ENCODE measurements at regions of chr1 and their contacts with region 1.

Region 1: GRCh38 chr1:228794173-228794572 is 58.9 kb downstream of the RHOU start:
- DNase-seq: no peak
- ATAC-seq: peak; percentile 74
- H3K4me3 Mint-ChIP-seq: no peak overlapping the region
- H3K27ac Mint-ChIP-seq: no peak overlapping the region
- H3K4me1 Mint-ChIP-seq: peaks cover 30% of the 10 kb centered on the region
- H3K27me3 Mint-ChIP-seq: no peaks in the 10 kb centered on the region

Region 2: GRCh38 chr1:228804671-228805413 is 10.7 kb after region 1 on chr1:
- POLR2A ChIA-PET with region 1: interaction called, 26 read pairs
- DNase-seq: peak; percentile 59
- ATAC-seq: peak; percentile 97
- H3K4me3 Mint-ChIP-seq: peak overlapping the region; percentile 72
- H3K27ac Mint-ChIP-seq: peak overlapping the region; percentile 96
- H3K4me1 Mint-ChIP-seq: peaks cover 70% of the 10 kb centered on the region
- H3K27me3 Mint-ChIP-seq: no peaks in the 10 kb centered on the region

Region 3: DNA sequence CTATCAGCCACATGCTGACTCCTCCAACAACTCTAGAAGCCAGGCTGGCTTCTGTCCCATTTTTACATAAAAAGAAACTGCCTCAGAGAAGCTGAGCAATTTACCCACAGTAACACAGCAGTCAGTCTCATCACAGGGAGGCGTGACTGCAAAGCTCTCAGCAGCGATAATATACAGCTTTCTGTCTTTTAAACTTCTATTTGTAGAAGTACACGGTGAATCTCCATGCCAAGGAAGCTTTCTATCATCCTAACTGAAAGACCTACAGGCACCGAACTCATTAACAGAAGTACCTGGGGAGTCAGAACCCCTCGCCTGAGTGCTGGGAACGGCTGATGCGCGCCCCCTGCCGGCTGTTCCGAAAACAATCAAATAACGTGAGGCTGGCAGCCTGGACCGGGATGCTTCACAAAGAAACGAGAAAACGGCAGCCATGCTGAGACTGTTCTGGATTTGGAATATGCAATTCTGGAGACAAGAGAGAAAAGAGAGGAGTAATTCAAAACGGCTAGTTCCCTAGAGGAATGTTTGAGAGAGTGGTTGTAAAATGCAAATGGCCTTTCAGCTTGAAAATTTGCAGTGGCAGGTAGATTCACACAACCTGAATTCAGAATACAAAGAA is 433.2 kb after region 1 on chr1:
- POLR2A ChIA-PET with region 1: no interaction called
- DNase-seq: peak; percentile 86
- ATAC-seq: peak; percentile 75
- H3K4me3 Mint-ChIP-seq: no peak overlapping the region
- H3K27ac Mint-ChIP-seq: no peak overlapping the region
- H3K4me1 Mint-ChIP-seq: peaks cover 8% of the 10 kb centered on the region
- H3K27me3 Mint-ChIP-seq: peaks cover 5% of the 10 kb centered on the region

Measured in activated naive CD8-positive, alpha-beta T cell treated with anti-CD3 and anti-CD28 coated beads, Interleukin-2, amount 10 ng/mL, durations not matched to agents 7 days and 5 days (primary cell).